CD8-positive, alpha-beta T cell (primary cell): ENCODE measurements at regions of chr16 and their contacts with region 1.

Region 1: GRCh38 chr16:56317998-56318826 is 107.1 kb downstream of the AMFR start:
- DNase-seq: peak; percentile 50 to 87 (median 78)
- ATAC-seq: peak; percentile 99
- H3K4me3 ChIP-seq: peak overlapping the region; percentile 28 to 30
- H3K4me3 Mint-ChIP-seq: peak overlapping the region; percentile 60
- H3K27ac ChIP-seq: no peak overlapping the region
- H3K27ac Mint-ChIP-seq: no peak overlapping the region
- H3K4me1 ChIP-seq: peaks cover 6% of the 10 kb centered on the region
- H3K4me1 Mint-ChIP-seq: peaks cover 7% of the 10 kb centered on the region
- H3K27me3 ChIP-seq: peaks cover 0 to 3% of the 10 kb centered on the region in 2 experiments
- H3K27me3 Mint-ChIP-seq: no peaks in the 10 kb centered on the region
- CTCF ChIP-seq: peak; percentile 94

Region 2: GRCh38 chr16:55711959-55712876 is 606.0 kb before region 1 on chr16:
- CTCF ChIA-PET with region 1: interaction called, 12 read pairs
- POLR2A ChIA-PET with region 1: no interaction called
- intact Hi-C with region 1: loop called in 1 of 2 experiments (anchors 1 kb)
- DNase-seq: peak in 8 of 9 experiments; percentile 36 to 70 (median 59)
- ATAC-seq: no peak
- H3K4me3 ChIP-seq: no peak overlapping the region
- H3K4me3 Mint-ChIP-seq: no peak overlapping the region
- H3K27ac ChIP-seq: no peak overlapping the region
- H3K27ac Mint-ChIP-seq: no peak overlapping the region
- H3K4me1 ChIP-seq: no peaks in the 10 kb centered on the region
- H3K4me1 Mint-ChIP-seq: no peaks in the 10 kb centered on the region
- H3K27me3 ChIP-seq: no peaks in the 10 kb centered on the region
- H3K27me3 Mint-ChIP-seq: peaks cover 25% of the 10 kb centered on the region
- CTCF ChIP-seq: peak; percentile 67

Region 3: DNA sequence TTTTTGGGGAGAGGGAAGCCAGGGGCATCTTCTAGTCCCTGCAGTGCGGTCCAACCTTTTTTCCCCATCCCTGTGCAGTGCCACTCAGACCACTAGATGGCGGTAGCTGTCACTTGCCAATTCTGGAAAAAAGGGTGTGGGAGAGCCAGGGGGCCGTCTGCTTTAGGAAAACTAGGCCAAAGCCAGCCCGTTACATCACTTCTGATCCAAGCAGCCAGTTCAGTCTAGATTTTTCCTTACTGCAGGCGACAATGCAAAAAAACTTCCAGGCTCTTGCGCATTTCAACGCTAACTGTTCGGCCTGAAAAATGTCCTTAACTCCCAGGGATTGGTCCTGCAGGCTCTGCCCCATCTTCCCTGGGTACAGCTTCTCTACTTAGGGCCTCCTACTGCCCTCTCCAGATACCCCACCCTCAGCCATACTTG is 373.8 kb before region 1 on chr16:
- CTCF ChIA-PET with region 1: interaction called, 112 read pairs
- POLR2A ChIA-PET with region 1: no interaction called
- intact Hi-C with region 1: loop called in 1 of 2 experiments (anchors 1 kb)
- DNase-seq: peak; percentile 8 to 70 (median 50)
- ATAC-seq: no peak
- H3K4me3 ChIP-seq: no peak overlapping the region
- H3K4me3 Mint-ChIP-seq: no peak overlapping the region
- H3K27ac ChIP-seq: no peak overlapping the region
- H3K27ac Mint-ChIP-seq: no peak overlapping the region
- H3K4me1 ChIP-seq: no peaks in the 10 kb centered on the region
- H3K4me1 Mint-ChIP-seq: no peaks in the 10 kb centered on the region
- H3K27me3 ChIP-seq: no peaks in the 10 kb centered on the region
- H3K27me3 Mint-ChIP-seq: peaks cover 44% of the 10 kb centered on the region
- CTCF ChIP-seq: peak; percentile 87

Region 4: GRCh38 chr16:56191156-56191815 is 126.9 kb before region 1 on chr16 and contains the start of gene GNAO1:
- CTCF ChIA-PET with region 1: no interaction called
- POLR2A ChIA-PET with region 1: no interaction called
- intact Hi-C with region 1: no loop called
- DNase-seq: peak; percentile 41 to 92 (median 60)
- ATAC-seq: peak; percentile 76
- H3K4me3 ChIP-seq: peak within 1 kb of the TSS; percentile 43 to 65
- H3K4me3 Mint-ChIP-seq: peak within 1 kb of the TSS; percentile 82
- H3K27ac ChIP-seq: peak within 1 kb of the TSS in 1 of 2 experiments; percentile 56
- H3K27ac Mint-ChIP-seq: peak within 1 kb of the TSS; percentile 49
- H3K4me1 ChIP-seq: peaks cover 38% of the 10 kb centered on the region
- H3K4me1 Mint-ChIP-seq: peaks cover 27% of the 10 kb centered on the region
- H3K27me3 ChIP-seq: peaks cover 20 to 21% of the 10 kb centered on the region in 2 experiments
- H3K27me3 Mint-ChIP-seq: peaks cover 40% of the 10 kb centered on the region
- CTCF ChIP-seq: no peak
- total RNA-seq, gene GNAO1: 2.3 to 3.6 TPM

Region 5: GRCh38 chr16:56203052-56203451 is 115.2 kb before region 1 on chr16:
- CTCF ChIA-PET with region 1: no interaction called
- POLR2A ChIA-PET with region 1: no interaction called
- intact Hi-C with region 1: loop called in 1 of 2 experiments (anchors 5 kb)
- DNase-seq: peak in 7 of 9 experiments; percentile 28 to 77 (median 46)
- ATAC-seq: peak; percentile 75
- H3K4me3 ChIP-seq: no peak overlapping the region
- H3K4me3 Mint-ChIP-seq: no peak overlapping the region
- H3K27ac ChIP-seq: no peak overlapping the region
- H3K27ac Mint-ChIP-seq: no peak overlapping the region
- H3K4me1 ChIP-seq: peaks cover 26% of the 10 kb centered on the region
- H3K4me1 Mint-ChIP-seq: peaks cover 21% of the 10 kb centered on the region
- H3K27me3 ChIP-seq: no peaks in the 10 kb centered on the region
- H3K27me3 Mint-ChIP-seq: no peaks in the 10 kb centered on the region
- CTCF ChIP-seq: peak; percentile 29

Region 6: DNA sequence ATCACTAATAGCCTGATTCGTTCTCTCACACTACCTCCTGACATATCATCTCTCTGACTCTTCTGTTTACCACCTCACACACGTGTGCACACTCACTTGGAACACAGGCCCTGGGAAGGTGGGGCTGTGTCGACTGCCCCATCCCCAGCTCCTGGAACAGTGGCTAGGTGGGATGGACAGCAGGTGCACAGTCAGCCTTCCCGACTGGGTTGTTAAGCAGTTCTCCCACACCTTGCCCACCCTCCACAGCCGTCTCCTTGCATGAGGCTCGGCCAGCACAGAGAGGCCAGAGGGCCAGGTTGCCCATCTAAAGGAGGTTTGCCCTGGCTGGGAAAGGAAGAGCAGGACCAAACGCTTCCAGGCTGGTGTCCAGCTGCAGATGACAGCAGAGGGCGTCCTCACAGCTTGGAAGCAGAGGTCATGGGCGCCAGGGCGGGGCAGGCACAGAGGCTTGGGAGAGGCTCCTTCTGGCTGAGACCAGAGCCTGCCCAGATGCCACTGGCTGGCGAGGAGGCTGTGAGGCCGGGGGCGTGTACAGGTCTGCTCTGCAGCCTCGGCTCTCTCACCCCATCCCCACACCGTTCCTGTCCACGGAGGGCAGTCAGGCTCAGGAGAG is 14.4 kb after region 1 on chr16:
- CTCF ChIA-PET with region 1: interaction called, 35 read pairs
- POLR2A ChIA-PET with region 1: no interaction called
- intact Hi-C with region 1: no loop called
- DNase-seq: no peak
- ATAC-seq: no peak
- H3K4me3 ChIP-seq: no peak overlapping the region
- H3K4me3 Mint-ChIP-seq: no peak overlapping the region
- H3K27ac ChIP-seq: no peak overlapping the region
- H3K27ac Mint-ChIP-seq: no peak overlapping the region
- H3K4me1 ChIP-seq: no peaks in the 10 kb centered on the region
- H3K4me1 Mint-ChIP-seq: no peaks in the 10 kb centered on the region
- H3K27me3 ChIP-seq: no peaks in the 10 kb centered on the region
- H3K27me3 Mint-ChIP-seq: no peaks in the 10 kb centered on the region
- CTCF ChIP-seq: no peak

Region 7: GRCh38 chr16:56436258-56436657 is 118.0 kb after region 1 on chr16:
- CTCF ChIA-PET with region 1: no interaction called
- POLR2A ChIA-PET with region 1: no interaction called
- intact Hi-C with region 1: no loop called
- DNase-seq: no peak
- ATAC-seq: no peak
- H3K4me3 ChIP-seq: no peak overlapping the region
- H3K4me3 Mint-ChIP-seq: no peak overlapping the region
- H3K27ac ChIP-seq: no peak overlapping the region
- H3K27ac Mint-ChIP-seq: no peak overlapping the region
- H3K4me1 ChIP-seq: no peaks in the 10 kb centered on the region
- H3K4me1 Mint-ChIP-seq: no peaks in the 10 kb centered on the region
- H3K27me3 ChIP-seq: no peaks in the 10 kb centered on the region
- H3K27me3 Mint-ChIP-seq: no peaks in the 10 kb centered on the region
- CTCF ChIP-seq: no peak